ENCODE measurements at regions of chr6 and their contacts with region 1.

Region 1: GRCh38 chr6:71190809-71191208 is 97.8 kb upstream of the OGFRL1 start:
- DNase-seq: peak; percentile 58
- ATAC-seq: no peak
- H3K4me3 ChIP-seq: no peak overlapping the region
- H3K27ac ChIP-seq: no peak overlapping the region
- H3K4me1 ChIP-seq: peaks cover 11% of the 10 kb centered on the region
- H3K27me3 ChIP-seq: no peaks in the 10 kb centered on the region
- CTCF ChIP-seq: peak; percentile 61

Region 2: DNA sequence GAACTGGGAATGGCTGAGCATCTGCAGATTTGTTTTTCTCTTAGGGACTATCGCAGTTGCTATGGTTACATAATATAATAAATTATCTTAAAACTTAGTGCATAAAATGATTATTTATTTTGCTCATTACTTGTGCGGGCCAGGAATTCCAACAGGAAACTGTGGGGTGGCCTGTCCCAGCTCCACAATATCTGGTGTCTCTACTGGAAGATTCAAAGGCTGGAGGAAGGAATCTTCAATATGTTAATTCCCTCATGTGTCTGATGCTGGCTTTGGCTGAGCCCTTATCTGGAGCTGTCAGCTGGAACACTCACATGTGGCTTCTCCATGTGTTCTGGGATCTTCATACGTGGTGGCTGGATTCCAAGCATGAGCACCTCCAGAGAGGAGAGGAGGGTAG is 210.1 kb before region 1 on chr6:
- CTCF ChIA-PET with region 1: no interaction called
- POLR2A ChIA-PET with region 1: no interaction called
- intact Hi-C with region 1: no loop called
- DNase-seq: no peak
- ATAC-seq: no peak
- H3K4me3 ChIP-seq: no peak overlapping the region
- H3K27ac ChIP-seq: no peak overlapping the region
- H3K4me1 ChIP-seq: no peaks in the 10 kb centered on the region
- H3K27me3 ChIP-seq: no peaks in the 10 kb centered on the region
- CTCF ChIP-seq: no peak

Region 3: DNA sequence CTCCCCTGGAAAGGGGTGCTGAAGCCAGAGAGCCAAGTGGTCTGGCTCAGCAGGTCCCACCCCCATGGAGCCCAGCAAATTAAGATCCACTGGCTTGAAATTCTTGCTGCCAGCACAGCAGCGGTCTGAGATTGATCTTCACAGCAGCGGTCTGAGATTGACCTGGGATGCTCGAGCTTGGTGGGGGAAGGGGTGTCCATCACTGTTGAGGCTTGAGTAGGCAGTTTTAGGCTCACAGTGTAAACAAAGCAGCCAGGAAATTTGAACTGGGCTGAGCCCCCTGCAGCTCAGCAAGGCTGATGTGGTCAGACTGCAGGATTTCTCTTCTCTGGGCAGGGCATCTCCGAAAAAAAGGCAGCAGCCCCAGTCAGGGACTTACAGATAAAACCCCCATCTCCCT is 192.7 kb before region 1 on chr6:
- CTCF ChIA-PET with region 1: no interaction called
- POLR2A ChIA-PET with region 1: no interaction called
- intact Hi-C with region 1: no loop called
- DNase-seq: no peak
- ATAC-seq: no peak
- H3K4me3 ChIP-seq: no peak overlapping the region
- H3K27ac ChIP-seq: no peak overlapping the region
- H3K4me1 ChIP-seq: no peaks in the 10 kb centered on the region
- H3K27me3 ChIP-seq: no peaks in the 10 kb centered on the region
- CTCF ChIP-seq: no peak

Region 4: DNA sequence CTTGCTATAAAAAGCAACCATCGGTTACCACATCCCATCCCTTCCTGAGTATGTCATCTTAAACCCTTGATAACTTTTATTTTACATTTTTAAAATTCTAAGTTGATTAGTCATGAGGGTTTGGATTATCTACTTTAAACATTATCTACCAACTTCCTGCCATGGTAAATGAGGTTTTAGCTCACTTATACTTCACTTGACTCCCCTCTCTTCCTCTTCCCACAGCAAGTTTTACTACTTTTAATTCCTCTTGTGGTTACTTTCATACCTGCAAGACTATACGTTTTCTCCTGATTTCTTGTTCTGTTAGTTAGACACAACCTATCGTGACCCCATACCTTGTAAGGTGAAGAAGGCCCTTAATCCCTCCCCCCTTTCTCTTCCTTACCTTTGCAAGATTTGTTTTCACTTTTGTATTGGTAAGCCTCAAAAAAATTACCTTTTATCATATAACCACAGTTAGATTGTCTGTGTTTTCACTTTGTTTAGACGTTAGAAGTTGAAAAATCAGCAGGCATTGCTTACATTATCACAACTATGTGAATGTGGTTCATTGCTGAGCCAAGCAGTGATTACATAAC is 37.7 kb after region 1 on chr6:
- CTCF ChIA-PET with region 1: no interaction called
- POLR2A ChIA-PET with region 1: no interaction called
- intact Hi-C with region 1: loop called (anchors 2 kb)
- DNase-seq: peak; percentile 77
- ATAC-seq: peak; percentile 88
- H3K4me3 ChIP-seq: no peak overlapping the region
- H3K27ac ChIP-seq: 0 out of 2 replicates have a peak overlapping the region, but pooled peaks have one; percentile 25
- H3K4me1 ChIP-seq: peaks cover 22% of the 10 kb centered on the region
- H3K27me3 ChIP-seq: no peaks in the 10 kb centered on the region
- CTCF ChIP-seq: no peak

Region 5: DNA sequence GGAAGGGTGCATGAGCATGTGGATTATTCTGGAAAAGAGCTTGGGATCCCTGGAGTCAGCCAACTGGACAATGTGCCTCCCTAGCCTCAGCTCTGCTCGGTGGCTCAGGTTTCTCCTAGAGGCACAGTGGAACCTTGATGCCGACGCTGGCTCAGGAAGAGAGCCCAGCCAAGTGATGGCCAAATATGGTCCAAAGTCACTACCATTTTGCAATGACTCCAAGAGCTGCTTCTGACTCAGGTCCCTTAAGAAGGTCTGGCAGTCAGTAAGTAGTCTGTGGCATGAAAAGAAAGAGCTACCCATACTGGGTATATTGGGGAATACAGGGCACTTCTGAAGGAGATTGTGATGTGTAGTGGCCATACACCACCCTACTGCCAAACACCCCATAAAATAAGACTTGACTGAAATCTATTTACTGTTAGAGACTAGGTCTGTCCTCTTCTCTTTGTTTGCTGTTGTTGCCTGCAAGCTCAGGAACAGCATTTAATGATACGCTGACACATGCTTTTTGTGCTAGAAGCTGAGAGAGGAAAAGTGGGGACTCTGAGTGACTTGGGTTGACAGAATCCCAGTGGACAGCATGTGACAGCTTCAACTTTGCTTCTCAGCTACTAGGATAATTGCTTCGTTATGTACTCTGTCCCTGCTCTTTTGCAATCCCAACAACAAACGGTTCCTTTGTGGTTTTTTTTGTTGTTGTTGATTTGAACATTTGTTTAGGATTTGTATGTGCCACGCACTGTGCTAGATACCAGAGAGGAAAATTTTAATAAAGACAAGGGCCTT is 67.5 kb after region 1 on chr6:
- CTCF ChIA-PET with region 1: no interaction called
- POLR2A ChIA-PET with region 1: no interaction called
- intact Hi-C with region 1: no loop called
- DNase-seq: no peak
- ATAC-seq: no peak
- H3K4me3 ChIP-seq: no peak overlapping the region
- H3K27ac ChIP-seq: no peak overlapping the region
- H3K4me1 ChIP-seq: no peaks in the 10 kb centered on the region
- H3K27me3 ChIP-seq: no peaks in the 10 kb centered on the region
- CTCF ChIP-seq: no peak

Region 6: DNA sequence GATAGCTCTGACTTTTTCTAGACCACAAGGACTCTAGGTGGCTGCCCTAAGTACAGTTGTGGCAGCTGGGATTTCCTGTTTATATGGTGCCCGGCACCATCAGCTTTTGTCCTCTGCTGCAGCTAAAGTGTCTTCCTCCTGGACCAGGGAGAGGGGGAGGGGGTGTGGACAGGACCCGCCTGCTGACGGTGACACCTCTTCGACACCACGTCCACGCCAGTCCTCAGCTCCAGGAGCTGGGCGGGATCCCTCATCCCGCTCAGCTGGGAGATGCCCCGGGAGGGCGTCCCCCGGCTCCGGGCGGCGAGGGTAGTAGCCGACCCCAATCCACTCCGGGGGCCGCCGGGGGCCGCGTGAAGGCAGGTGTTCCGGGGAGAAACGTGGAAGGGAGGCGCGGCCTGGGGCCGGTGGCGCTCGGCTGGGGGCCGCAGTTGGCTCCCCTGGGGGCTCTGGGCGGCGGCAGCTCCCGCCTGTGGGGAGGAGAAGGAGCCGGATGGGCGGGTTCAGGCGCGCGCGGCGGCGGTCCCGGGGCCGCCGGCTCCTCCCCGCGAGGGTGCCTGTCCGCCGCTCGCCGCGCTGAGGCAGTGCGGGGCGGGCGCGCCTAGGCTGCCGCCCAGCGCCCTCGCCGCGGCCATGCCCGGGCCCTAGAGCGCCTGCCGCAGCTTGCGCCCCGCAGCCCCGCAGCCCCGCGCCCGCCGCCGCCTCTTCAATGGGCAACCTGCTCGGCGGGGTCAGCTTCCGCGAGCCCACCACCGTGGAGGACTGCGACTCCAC is 97.6 kb after region 1 on chr6 and contains the start of gene OGFRL1:
- CTCF ChIA-PET with region 1: no interaction called
- POLR2A ChIA-PET with region 1: no interaction called
- intact Hi-C with region 1: loop called (anchors 5 kb)
- DNase-seq: peak; percentile 69
- ATAC-seq: peak; percentile 90
- H3K4me3 ChIP-seq: peak within 1 kb of the TSS; percentile 76
- H3K27ac ChIP-seq: no peak within 1 kb of the TSS
- H3K4me1 ChIP-seq: peaks cover 12% of the 10 kb centered on the region
- H3K27me3 ChIP-seq: no peaks in the 10 kb centered on the region
- CTCF ChIP-seq: no peak
- total RNA-seq, gene OGFRL1: 5.2 and 6.0 TPM in 2 replicates

Region 7: GRCh38 chr6:71349395-71349794 is 158.6 kb after region 1 on chr6:
- CTCF ChIA-PET with region 1: interaction called, 3 read pairs
- POLR2A ChIA-PET with region 1: no interaction called
- intact Hi-C with region 1: loop called (anchors 1 kb)
- DNase-seq: peak; percentile 65
- ATAC-seq: no peak
- H3K4me3 ChIP-seq: no peak overlapping the region
- H3K27ac ChIP-seq: peak overlapping the region; percentile 46
- H3K4me1 ChIP-seq: peaks cover 11% of the 10 kb centered on the region
- H3K27me3 ChIP-seq: no peaks in the 10 kb centered on the region
- CTCF ChIP-seq: peak; percentile 66

Region 8: DNA sequence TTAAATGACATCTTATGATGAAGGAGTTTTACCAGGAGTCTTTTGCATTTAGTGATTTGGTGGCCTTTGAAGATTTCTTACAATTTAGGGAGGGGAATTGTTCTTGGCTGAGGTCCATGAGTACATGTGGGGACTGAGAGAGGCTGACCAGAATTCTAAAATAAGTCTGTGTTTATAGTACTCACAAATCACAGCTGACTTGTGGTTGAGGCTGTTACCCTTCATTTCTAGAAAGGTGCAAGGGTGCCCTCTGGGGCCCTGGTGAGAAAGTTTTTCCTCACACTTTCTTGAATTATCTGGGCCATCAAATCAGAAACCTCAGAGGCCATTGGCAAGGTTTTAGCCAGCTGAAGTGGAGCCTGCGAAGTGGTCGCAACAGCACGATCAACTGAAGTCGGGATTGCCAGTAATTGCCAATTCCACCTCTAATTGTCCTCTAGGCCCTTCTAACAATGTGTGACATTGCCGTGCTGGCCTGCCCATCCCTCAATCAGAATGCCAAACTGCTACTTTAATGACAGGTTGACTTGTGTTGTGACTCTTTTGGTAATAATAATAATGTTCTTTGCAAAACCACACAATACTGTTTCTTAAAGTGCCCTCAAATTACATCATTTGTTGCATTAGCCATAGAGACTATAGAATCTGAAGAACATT is 319.4 kb after region 1 on chr6:
- CTCF ChIA-PET with region 1: no interaction called
- POLR2A ChIA-PET with region 1: no interaction called
- intact Hi-C with region 1: loop called (anchors 1 kb)
- DNase-seq: peak; percentile 60
- ATAC-seq: peak; percentile 56
- H3K4me3 ChIP-seq: no peak overlapping the region
- H3K27ac ChIP-seq: no peak overlapping the region
- H3K4me1 ChIP-seq: no peaks in the 10 kb centered on the region
- H3K27me3 ChIP-seq: no peaks in the 10 kb centered on the region
- CTCF ChIP-seq: peak; percentile 68